GM12878 (cell line): ENCODE measurements at regions of chr4 and their contacts with region 1.

Region 1: GRCh38 chr4:25234390-25235370 is 847 bp downstream of the PI4K2B start:
- DNase-seq: peak; percentile 78
- ATAC-seq: peak; percentile 76
- H3K4me3 ChIP-seq: peak overlapping the region; percentile 78
- H3K27ac ChIP-seq: peak overlapping the region; percentile 87
- H3K4me1 ChIP-seq: peaks cover 11% of the 10 kb centered on the region
- H3K27me3 ChIP-seq: no peaks in the 10 kb centered on the region
- CTCF ChIP-seq: peak; percentile 41 to 60 (median 44); a peak in 5 of 6 replicates
- EP300 ChIP-seq: 0 out of 4 replicates have a peak, but pooled peaks of 1 of the 2 experiments have one; percentile 16
- POLR2A ChIP-seq: no peak
- RAD21 ChIP-seq: peak; percentile 41

Region 2: DNA sequence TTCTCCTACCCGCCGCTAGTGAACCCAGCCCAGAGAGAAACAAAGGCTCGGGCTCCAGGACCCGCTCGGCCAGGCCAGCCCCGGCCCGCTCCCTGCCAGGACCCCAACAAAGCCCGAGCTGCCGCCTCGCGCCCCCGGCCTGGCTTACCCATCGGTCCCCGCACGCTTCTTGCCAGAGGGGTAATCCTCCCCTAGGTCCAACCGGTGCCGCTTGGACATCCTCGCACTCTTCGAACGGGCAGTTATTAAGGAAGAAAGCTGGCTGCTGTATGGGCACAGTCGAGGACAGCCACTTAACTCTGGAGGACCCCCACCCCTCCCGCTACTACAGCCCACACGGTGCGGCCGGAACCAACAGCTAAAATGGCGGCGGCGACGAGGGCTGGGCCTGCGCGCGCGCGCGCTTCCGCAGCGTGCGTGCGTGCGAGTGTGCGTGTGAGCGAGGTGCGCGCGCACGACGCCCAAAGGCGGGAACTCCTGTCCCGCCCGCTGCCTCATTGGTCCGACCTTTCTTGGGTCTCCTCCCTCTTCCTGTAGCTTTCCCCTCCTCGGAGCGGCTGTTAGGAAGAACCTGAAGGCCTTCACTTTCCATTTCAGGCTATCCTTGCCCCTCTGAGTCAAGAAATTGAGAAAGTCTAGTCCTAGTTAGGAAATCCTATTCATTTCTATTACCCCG is 650.4 kb before region 1 on chr4 and contains the start of gene DHX15:
- CTCF ChIA-PET with region 1: no interaction called
- POLR2A ChIA-PET with region 1: interaction called, 6 read pairs
- RAD21 ChIA-PET with region 1: no interaction called
- SMC1A ChIA-PET with region 1: no interaction called
- in situ Hi-C with region 1: loop called (anchors 10 kb)
- intact Hi-C with region 1: loop called (anchors 10 kb)
- DNase-seq: peak; percentile 86
- ATAC-seq: peak; percentile 88
- H3K4me3 ChIP-seq: peak within 1 kb of the TSS; percentile 70
- H3K27ac ChIP-seq: peak within 1 kb of the TSS; percentile 89
- H3K4me1 ChIP-seq: peaks cover 12% of the 10 kb centered on the region
- H3K27me3 ChIP-seq: no peaks in the 10 kb centered on the region
- CTCF ChIP-seq: no peak
- EP300 ChIP-seq: no peak
- POLR2A ChIP-seq: peak; percentile 93
- RAD21 ChIP-seq: no peak
- polyA plus RNA-seq, gene DHX15: 177 to 181 TPM

Region 3: DNA sequence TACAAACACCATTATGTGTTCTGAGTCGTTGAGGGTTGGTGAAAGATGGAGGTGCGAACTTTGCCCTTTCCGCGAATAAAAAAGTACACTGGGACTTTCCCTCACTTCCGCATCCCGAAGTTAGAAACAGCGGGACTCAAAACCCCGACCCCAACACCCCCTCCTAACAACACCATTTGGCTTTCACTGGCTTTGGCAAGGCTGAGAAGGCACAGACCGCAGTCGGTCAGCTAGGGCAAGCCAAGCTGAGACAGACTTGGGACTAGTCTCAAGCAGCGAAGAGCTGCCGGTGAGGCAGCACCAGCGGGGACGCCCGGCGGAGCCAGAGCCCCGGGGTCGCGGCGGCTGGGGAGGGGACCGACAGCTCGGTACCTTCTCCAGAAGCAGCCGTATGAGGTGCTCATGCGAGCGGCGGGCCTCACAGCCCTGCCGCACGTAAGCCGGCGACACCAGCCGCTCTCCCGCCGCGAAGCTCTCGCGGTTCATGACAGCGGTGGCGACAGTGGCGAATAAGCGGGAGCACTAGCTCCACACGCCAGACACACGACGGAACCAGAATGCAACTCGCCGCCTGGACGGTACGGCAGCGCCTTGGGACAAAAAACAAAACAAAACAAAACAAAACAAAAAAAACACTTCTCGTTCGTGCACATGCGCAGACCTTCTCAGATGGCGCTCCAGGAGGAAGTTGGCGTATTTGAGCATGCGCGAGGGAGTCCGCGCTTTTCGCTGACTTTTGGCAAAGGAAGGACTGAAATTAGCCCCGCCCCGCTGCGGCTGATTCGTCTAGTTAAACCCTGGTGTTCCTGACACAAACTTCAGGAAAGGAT is 74.6 kb before region 1 on chr4 and contains the start of gene SEPSECS:
- CTCF ChIA-PET with region 1: interaction called, 16 read pairs
- POLR2A ChIA-PET with region 1: interaction called, 49 read pairs
- RAD21 ChIA-PET with region 1: interaction called, 11 read pairs
- SMC1A ChIA-PET with region 1: interaction called, 7 read pairs
- in situ Hi-C with region 1: no loop called
- intact Hi-C with region 1: loop called (anchors 2 kb)
- DNase-seq: peak; percentile 96
- ATAC-seq: peak; percentile 90
- H3K4me3 ChIP-seq: peak within 1 kb of the TSS; percentile 94
- H3K27ac ChIP-seq: peak within 1 kb of the TSS; percentile 96
- H3K4me1 ChIP-seq: peaks cover 4% of the 10 kb centered on the region
- H3K27me3 ChIP-seq: no peaks in the 10 kb centered on the region
- CTCF ChIP-seq: no peak
- EP300 ChIP-seq: no peak
- POLR2A ChIP-seq: peak; percentile 96
- RAD21 ChIP-seq: no peak
- polyA plus RNA-seq, gene SEPSECS: 2.8 to 2.9 TPM

Region 4: DNA sequence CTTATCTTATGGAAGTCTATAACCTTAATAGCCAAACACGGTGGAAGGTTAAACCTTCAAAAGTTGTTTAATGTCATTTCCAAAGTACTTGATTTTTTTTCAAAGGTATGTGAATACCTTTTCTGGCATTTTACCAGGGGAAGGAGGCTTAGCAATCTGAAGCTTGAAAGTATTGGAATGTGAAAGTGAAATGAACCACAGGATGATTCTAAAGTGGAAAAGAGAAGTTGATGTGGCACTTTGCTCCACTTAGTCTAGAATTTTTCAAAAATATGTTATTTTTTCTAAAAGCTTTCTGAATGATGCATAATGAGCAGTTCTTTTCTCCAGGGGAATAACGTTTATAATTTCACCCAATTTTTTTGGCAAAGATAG is 18.4 kb after region 1 on chr4:
- CTCF ChIA-PET with region 1: interaction called, 4 read pairs
- POLR2A ChIA-PET with region 1: interaction called, 7 read pairs
- RAD21 ChIA-PET with region 1: interaction called, 9 read pairs
- SMC1A ChIA-PET with region 1: interaction called, 13 read pairs
- in situ Hi-C with region 1: no loop called
- intact Hi-C with region 1: no loop called
- DNase-seq: no peak
- ATAC-seq: peak; percentile 67
- H3K4me3 ChIP-seq: 0 out of 2 replicates have a peak overlapping the region, but pooled peaks have one; percentile 7
- H3K27ac ChIP-seq: peak overlapping the region; percentile 48; the same call in 1 of the 2 replicates
- H3K4me1 ChIP-seq: peaks cover 11% of the 10 kb centered on the region
- H3K27me3 ChIP-seq: no peaks in the 10 kb centered on the region
- CTCF ChIP-seq: no peak
- EP300 ChIP-seq: no peak
- POLR2A ChIP-seq: no peak
- RAD21 ChIP-seq: no peak

Region 5: GRCh38 chr4:25376754-25377571 is 142.3 kb after region 1 on chr4 and contains the start of gene ANAPC4:
- CTCF ChIA-PET with region 1: interaction called, 3 read pairs
- POLR2A ChIA-PET with region 1: interaction called, 3 read pairs
- RAD21 ChIA-PET with region 1: no interaction called
- SMC1A ChIA-PET with region 1: no interaction called
- in situ Hi-C with region 1: no loop called
- intact Hi-C with region 1: loop called (anchors 5 kb)
- DNase-seq: peak; percentile 69
- ATAC-seq: peak; percentile 97
- H3K4me3 ChIP-seq: peak within 1 kb of the TSS; percentile 96
- H3K27ac ChIP-seq: peak within 1 kb of the TSS; percentile 55
- H3K4me1 ChIP-seq: no peaks in the 10 kb centered on the region
- H3K27me3 ChIP-seq: no peaks in the 10 kb centered on the region
- CTCF ChIP-seq: no peak
- EP300 ChIP-seq: no peak
- POLR2A ChIP-seq: peak; percentile 97
- RAD21 ChIP-seq: no peak
- polyA plus RNA-seq, gene ANAPC4: 16.3 to 17.0 TPM